MCF 10A (cell line): ENCODE measurements at regions of chr1 and their contacts with region 1.

Region 1: DNA sequence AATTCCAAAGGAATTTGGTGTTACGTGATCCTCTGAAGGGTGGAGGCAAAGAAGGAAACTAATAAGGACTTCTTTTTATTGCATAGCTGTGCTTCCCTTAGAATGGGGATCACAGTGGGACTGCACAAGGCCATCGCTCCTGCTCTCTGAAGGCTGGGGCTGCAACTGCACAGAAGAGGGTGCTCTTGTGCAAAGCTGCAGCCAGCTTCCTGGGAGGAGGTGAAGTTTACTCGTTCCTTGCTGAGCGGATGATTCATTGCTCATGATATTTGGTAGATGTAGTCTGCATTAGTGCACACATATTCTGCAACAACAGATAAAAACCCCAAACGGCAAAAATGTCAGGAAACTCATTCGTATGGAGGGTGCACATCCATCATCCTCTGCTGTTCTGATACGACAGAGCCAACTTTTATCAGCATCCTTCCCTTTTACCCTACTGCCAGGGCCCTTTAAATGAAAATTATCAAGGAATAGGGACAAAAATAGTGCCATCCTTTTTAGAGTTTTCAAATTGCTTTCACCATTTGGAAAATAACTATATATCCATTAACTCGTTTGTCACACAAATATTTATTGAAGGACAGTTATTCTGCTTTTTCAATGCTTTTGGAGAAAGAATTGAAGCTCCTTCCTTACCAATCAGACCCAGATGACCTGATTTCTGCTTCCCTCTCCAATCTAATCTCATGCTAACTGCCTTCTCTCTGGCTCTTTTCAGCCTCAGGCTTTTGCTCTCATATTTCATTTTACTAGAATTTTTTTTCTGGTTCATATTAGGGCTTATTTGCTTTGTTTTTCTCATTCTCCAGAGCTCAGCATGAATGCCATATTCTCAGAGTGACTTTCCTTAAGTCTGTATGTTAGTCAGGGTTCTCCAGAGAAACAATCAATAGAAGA is 263.6 kb downstream of the DUSP10 start:
- DNase-seq: peak; percentile 96
- H3K4me3 Mint-ChIP-seq: no peak overlapping the region
- H3K27ac Mint-ChIP-seq: no peak overlapping the region
- H3K4me1 Mint-ChIP-seq: no peaks in the 10 kb centered on the region
- H3K27me3 Mint-ChIP-seq: no peaks in the 10 kb centered on the region
- CTCF ChIP-seq: peak; percentile 99

Region 2: DNA sequence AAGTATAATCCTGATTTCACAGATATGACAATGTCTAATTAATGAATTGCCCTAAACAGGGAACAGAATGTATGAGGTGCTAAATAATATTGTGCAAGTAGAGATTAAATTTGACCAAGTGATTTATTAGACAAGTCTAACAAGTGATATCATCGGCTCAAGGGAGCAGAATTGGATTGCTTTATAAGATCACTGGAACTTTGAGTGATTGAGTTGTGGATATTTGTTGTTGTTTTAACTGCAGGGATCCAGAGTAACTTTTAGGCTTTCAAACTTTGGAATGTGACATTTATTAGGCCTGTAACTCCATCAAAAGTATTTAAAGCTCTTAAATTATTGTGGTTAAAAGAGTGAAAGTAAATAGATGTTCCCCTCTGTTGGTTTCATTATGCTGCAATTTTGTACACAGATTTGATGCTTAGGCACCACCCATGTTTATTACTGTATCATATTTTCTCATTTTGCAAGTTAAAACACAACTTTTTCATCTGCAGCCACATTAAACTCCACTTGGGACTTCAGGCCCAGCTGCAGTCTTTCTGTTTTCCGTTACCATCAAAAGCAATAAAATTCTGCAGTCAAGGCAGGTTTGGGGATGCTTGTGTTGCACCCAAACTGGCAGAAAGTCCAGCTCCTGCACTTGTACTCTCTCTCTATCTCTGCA is 392.5 kb before region 1 on chr1:
- CTCF ChIA-PET with region 1: no interaction called
- POLR2A ChIA-PET with region 1: no interaction called
- intact Hi-C with region 1: no loop called
- DNase-seq: no peak
- H3K4me3 Mint-ChIP-seq: no peak overlapping the region
- H3K27ac Mint-ChIP-seq: no peak overlapping the region
- H3K4me1 Mint-ChIP-seq: no peaks in the 10 kb centered on the region
- H3K27me3 Mint-ChIP-seq: no peaks in the 10 kb centered on the region
- CTCF ChIP-seq: no peak

Region 3: DNA sequence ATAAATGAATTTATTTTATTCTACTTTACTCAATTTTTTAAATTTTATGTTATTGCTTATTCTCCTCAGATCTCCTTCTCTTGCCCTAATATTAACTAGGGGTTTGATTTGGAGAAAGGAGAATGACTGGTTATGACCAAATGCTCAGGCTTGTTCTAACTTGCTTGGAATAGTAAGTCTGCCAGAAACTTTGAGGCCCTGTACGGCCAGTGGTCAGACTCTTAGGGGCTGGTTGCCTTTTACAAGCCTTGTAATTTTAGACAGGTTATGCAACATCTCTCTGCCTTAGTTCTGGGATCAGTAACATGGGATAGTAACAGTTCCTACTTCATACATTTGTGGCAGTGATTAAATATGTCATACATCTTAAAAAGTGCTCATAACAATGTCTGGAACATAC is 16.0 kb before region 1 on chr1:
- CTCF ChIA-PET with region 1: interaction called, 33 read pairs
- POLR2A ChIA-PET with region 1: interaction called, 6 read pairs
- intact Hi-C with region 1: no loop called
- DNase-seq: peak; percentile 93
- H3K4me3 Mint-ChIP-seq: no peak overlapping the region
- H3K27ac Mint-ChIP-seq: no peak overlapping the region
- H3K4me1 Mint-ChIP-seq: peaks cover 5% of the 10 kb centered on the region
- H3K27me3 Mint-ChIP-seq: no peaks in the 10 kb centered on the region
- CTCF ChIP-seq: no peak

Region 4: DNA sequence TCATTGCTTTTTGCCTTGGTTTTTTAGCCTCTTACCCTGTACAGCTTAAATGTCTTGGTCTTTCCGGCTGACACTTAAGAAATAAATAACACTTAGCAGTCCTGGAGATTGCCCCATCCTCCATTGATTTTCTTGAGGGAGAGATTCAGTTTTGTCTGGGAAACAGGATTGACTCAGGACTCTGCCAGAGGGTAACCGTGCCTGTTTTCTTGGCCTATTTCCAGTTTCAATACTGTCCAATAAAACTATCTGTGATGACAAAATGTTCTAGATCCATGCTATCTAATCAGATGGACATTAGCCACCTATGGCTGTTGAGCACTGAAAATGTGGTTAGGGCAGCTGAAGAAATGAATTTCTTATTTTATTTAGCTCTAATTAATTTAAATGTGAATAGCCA is 47.4 kb after region 1 on chr1:
- CTCF ChIA-PET with region 1: interaction called, 15 read pairs
- POLR2A ChIA-PET with region 1: no interaction called
- intact Hi-C with region 1: no loop called
- DNase-seq: peak; percentile 38
- H3K4me3 Mint-ChIP-seq: no peak overlapping the region
- H3K27ac Mint-ChIP-seq: no peak overlapping the region
- H3K4me1 Mint-ChIP-seq: no peaks in the 10 kb centered on the region
- H3K27me3 Mint-ChIP-seq: no peaks in the 10 kb centered on the region
- CTCF ChIP-seq: no peak

Region 5: GRCh38 chr1:221886743-221887413 is 408.6 kb after region 1 on chr1:
- CTCF ChIA-PET with region 1: interaction called, 23 read pairs
- POLR2A ChIA-PET with region 1: interaction called, 5 read pairs
- intact Hi-C with region 1: loop called (anchors 1 kb)
- DNase-seq: peak; percentile 99
- H3K4me3 Mint-ChIP-seq: peak overlapping the region; percentile 55
- H3K27ac Mint-ChIP-seq: peak overlapping the region; percentile 85
- H3K4me1 Mint-ChIP-seq: peaks cover 60% of the 10 kb centered on the region
- H3K27me3 Mint-ChIP-seq: no peaks in the 10 kb centered on the region
- CTCF ChIP-seq: peak; percentile 11

Region 6: GRCh38 chr1:222002503-222002902 is 524.2 kb after region 1 on chr1:
- CTCF ChIA-PET with region 1: interaction called, 84 read pairs
- POLR2A ChIA-PET with region 1: interaction called, 3 read pairs
- intact Hi-C with region 1: no loop called
- DNase-seq: no peak
- H3K4me3 Mint-ChIP-seq: no peak overlapping the region
- H3K27ac Mint-ChIP-seq: no peak overlapping the region
- H3K4me1 Mint-ChIP-seq: peaks cover 9% of the 10 kb centered on the region
- H3K27me3 Mint-ChIP-seq: no peaks in the 10 kb centered on the region
- CTCF ChIP-seq: no peak

Region 7: GRCh38 chr1:222165629-222166028 is 687.3 kb after region 1 on chr1:
- CTCF ChIA-PET with region 1: interaction called, 41 read pairs
- POLR2A ChIA-PET with region 1: interaction called, 6 read pairs
- intact Hi-C with region 1: loop called (anchors 1 kb)
- DNase-seq: no peak
- H3K4me3 Mint-ChIP-seq: no peak overlapping the region
- H3K27ac Mint-ChIP-seq: no peak overlapping the region
- H3K4me1 Mint-ChIP-seq: peaks cover 16% of the 10 kb centered on the region
- H3K27me3 Mint-ChIP-seq: no peaks in the 10 kb centered on the region
- CTCF ChIP-seq: no peak